ENCODE measurements at regions of chr7 and their contacts with region 1.

Region 1: GRCh38 chr7:1086588-1087464 is 1.1 kb upstream of the GPER1 start:
- DNase-seq: no peak
- H3K4me3 ChIP-seq: peak overlapping the region; percentile 56
- CTCF ChIP-seq: peak; percentile 83

Region 2: DNA sequence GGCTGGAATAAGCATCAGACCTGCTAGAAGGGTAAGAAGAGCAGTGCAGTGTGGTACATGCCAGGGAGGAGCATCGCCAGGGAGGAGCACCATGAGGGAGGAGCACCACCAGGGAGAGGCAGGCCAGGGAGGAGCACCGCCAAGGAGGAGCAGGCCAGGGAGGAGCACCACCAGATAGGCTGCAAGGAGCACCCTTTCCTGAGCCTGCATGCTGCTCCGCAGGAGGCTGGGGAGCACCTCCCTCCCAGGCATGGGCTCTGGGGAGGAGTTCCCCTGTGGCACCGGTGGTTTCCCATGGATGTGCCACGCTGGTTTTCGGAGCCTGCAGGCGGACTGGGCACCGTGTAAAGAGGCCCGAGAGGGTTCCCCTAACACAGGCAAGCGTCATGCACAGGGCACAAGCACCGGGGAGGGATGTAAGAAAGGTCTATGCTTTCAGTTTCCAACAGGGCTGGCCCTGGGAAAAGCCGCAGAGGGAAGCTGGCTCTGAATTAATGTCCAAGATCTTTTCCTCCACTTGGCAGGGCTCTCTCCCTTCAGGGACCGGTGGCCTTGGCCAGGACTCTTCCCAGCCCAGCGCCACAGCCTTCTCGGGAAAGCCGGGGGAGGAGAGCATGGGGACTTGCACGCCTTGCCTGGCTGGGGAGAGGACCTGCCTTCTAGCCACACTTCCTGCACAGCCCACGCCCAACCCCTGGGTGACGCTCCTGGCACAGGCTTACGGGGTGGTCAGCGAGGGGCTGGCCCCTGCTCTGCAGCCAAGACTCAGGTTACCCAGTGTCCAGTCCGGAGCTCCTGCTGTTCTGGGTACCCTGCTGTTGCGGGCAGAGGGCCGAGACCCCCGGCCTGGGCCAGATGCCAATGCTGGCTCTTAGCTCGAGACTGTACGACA is 10.4 kb before region 1 on chr7:
- CTCF ChIA-PET with region 1: interaction called, 57 read pairs
- POLR2A ChIA-PET with region 1: no interaction called
- DNase-seq: no peak
- H3K4me3 ChIP-seq: no peak overlapping the region
- CTCF ChIP-seq: no peak

Region 3: DNA sequence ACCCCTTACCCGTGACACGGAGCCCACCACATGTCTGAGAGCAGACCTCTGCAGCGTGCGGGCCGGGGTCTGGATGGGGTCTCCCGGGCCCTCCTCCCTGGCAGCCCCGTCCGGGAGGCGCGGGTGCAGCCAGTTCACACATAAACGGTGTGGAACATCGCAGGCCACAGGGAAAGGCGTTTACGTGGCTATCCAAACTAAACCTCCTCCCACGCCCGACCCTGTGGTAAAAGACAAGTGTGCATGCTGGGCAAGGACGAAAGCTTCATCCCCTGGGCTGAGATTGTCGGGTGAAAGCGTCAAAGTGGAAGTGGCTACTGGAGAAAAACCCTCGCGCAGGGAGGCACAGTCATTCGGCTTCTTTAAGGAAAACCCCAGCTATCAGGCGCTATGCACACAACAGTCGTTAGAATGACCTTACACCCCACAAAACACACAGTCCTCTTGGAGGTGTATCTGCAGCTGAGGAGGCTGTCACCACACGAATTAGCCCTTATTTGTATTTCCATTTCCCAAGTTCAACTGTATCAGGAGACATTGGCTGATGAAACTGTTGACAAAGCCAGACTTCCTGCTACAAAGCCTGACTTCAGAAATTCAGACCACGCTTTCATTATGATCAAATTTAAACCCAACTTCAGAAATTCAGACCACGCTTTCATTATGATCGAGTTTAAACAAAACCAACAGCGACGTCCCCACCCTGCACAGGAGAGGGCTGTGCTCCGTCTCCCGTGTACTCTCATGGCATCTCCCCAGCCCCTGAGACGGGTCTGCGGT is 16.4 kb after region 1 on chr7:
- CTCF ChIA-PET with region 1: interaction called, 11 read pairs
- POLR2A ChIA-PET with region 1: no interaction called
- DNase-seq: no peak
- H3K4me3 ChIP-seq: no peak overlapping the region
- CTCF ChIP-seq: no peak

Region 4: DNA sequence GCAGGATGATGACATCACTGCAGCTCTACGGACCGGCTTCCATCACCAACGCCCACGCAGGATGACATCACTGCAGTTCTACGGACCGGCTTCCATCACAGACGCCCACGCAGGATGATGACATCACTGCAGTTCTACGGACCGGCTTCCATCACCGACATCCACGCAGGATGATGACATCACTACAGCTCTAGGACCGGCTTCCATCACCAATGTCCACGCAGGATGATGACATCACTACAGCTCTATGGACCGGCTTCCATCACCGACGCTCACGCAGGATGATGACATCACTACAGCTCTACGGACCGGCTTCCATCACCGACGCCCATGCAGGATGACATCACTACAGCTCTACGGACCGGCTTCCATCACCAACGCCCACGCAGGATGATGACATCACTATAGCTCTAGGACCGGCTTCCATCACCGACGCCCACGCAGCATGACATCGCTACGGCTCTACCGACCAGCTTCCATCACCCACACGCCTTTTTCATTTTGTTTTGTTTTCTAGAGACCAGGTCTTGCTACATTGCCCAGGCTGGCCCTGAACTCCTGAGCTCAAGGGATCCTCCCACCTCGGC is 30.6 kb after region 1 on chr7:
- CTCF ChIA-PET with region 1: interaction called, 24 read pairs
- POLR2A ChIA-PET with region 1: no interaction called
- DNase-seq: no peak
- H3K4me3 ChIP-seq: no peak overlapping the region
- CTCF ChIP-seq: no peak

Region 5: DNA sequence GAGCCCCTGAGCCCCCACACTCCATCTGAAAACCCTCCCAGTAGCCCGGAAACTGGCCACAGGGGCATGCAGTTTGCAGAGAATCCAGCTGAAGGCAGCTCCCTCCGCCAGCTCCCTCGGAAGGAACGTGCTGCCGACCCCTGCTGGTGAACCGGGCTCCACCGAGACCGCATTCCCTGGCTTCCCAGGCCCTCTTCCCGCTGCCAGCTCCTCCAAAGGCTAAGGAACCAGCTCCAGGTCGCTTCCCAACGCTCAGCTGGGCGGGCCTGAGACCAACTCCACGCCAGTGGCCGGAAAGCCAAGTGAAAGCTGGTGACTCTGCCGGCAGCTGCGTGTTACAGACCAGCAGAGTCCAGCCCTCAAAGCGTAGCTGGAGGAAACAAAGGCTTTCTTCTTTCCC is 36.9 kb after region 1 on chr7:
- CTCF ChIA-PET with region 1: interaction called, 24 read pairs
- POLR2A ChIA-PET with region 1: no interaction called
- DNase-seq: no peak
- H3K4me3 ChIP-seq: no peak overlapping the region
- CTCF ChIP-seq: peak; percentile 73

Region 6: DNA sequence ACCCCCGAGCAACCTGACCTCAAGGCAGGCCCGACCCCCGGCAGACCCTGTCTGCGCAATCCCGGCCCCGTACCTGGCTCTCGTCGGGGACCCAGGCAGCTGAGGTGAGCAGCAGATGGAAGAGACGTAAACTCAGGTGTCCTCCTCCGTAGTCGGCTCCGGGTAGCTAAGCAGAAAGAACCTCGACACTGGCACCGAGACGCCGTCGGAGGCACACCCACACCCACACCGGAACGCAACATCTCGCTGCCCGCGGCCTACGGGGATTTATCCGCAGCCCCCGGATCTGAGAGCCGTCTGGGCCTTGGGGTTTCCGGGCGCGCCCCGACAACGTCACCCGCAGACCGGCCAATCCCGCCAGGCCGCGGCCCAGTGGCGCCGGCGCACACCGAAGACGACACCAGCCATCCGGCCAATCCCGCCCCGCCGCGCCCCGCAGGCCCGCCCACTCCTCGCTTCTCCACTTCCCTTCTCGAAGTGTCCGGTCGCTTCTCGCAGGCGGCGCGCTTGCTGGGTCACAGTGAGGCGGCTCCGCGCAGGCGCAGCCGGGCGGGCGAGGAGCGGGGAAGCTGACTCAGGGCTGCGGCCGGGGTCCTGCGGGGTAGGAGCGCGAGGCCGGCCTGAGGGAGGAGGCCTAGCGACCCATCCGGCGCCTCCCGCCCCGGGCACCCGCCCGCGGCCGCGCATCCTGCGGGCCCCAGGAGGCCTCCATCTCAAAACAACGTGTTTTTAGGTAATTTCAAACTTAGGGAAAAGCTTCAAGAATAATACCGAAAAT is 73.3 kb after region 1 on chr7 and contains the start of gene ZFAND2A:
- CTCF ChIA-PET with region 1: interaction called, 13 read pairs
- POLR2A ChIA-PET with region 1: no interaction called
- DNase-seq: peak; percentile 67
- H3K4me3 ChIP-seq: peak within 1 kb of the TSS; percentile 99
- CTCF ChIP-seq: no peak

Region 7: GRCh38 chr7:1175967-1176851 is 89.4 kb after region 1 on chr7:
- CTCF ChIA-PET with region 1: interaction called, 11 read pairs
- POLR2A ChIA-PET with region 1: no interaction called
- DNase-seq: no peak
- H3K4me3 ChIP-seq: peak overlapping the region; percentile 25; the same call in 1 of the 2 replicates
- CTCF ChIP-seq: peak; percentile 96